Calu3 (cell line): ENCODE measurements at regions of chr1 and their contacts with region 1.

Region 1: DNA sequence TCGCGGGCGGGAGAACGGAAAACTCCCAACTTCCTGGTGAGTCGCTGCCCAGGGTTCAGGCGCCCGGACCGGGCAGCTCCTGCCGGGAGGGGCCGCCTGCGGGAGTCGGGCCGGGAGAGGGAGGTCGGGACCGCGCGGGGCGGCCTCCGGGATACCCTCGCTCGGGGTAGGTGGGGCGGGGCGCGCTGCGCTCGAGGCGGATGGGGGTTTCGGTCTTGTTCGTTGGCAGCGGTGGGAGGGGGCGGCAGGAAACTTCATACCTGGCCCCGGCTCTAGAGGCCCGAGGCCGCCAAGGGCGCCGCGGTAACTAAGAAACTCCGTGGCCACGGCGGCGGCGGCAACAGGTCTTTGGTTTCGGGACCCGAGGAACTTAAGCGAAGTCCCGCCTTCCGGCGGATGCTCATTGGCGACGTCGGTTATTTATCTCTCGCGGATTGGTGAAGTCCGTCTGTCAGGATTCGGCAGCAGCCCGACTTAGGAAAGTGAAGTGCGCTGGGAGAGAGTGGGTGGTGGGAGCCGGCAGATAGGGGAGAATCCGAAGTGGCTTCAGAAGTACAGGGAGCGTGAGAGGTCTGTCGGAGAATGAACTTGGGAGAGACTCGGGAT is 546 bp downstream of the NEK7 start:
- DNase-seq: peak; percentile 86
- H3K4me3 Mint-ChIP-seq: peak overlapping the region; percentile 87
- H3K27ac Mint-ChIP-seq: peak overlapping the region; percentile 81
- H3K4me1 Mint-ChIP-seq: peaks cover 51% of the 10 kb centered on the region
- H3K27me3 Mint-ChIP-seq: no peaks in the 10 kb centered on the region
- CTCF ChIP-seq: no peak

Region 2: GRCh38 chr1:197453376-197454058 is 703.8 kb before region 1 on chr1:
- CTCF ChIA-PET with region 1: no interaction called
- intact Hi-C with region 1: no loop called
- DNase-seq: no peak
- H3K4me3 Mint-ChIP-seq: no peak overlapping the region
- H3K27ac Mint-ChIP-seq: no peak overlapping the region
- H3K4me1 Mint-ChIP-seq: no peaks in the 10 kb centered on the region
- H3K27me3 Mint-ChIP-seq: no peaks in the 10 kb centered on the region
- CTCF ChIP-seq: no peak

Region 3: DNA sequence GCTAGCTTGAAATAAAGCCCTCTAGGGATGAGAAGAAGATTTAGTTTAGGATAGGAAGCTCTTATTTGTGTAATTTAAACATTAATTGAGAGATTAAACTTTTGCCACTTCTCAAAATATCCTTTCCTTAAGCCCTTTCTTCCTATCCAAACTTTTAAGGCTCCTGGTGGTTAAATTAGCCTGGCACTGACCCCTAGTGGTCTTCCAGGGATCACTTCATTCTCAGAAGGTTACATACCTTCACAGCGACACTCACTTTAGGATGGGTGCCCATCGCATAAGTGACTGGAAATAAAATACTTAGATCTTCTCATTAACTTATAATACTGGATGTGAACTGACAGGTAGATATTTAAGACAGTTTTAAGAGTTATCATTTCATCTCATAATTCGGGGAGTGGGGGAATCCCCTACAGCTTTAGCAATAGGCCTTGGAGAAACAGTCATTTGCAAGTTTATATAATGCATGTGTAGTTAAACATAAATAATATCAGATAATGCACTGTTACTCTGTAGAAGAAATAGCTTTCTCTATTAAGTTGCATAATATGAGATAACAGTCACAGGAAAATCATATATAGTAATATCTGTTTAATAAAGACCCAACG is 232.7 kb before region 1 on chr1:
- CTCF ChIA-PET with region 1: no interaction called
- intact Hi-C with region 1: loop called (anchors 10 kb)
- DNase-seq: peak; percentile 60
- H3K4me3 Mint-ChIP-seq: no peak overlapping the region
- H3K27ac Mint-ChIP-seq: no peak overlapping the region
- H3K4me1 Mint-ChIP-seq: peaks cover 49% of the 10 kb centered on the region
- H3K27me3 Mint-ChIP-seq: no peaks in the 10 kb centered on the region
- CTCF ChIP-seq: peak; percentile 51

Region 4: GRCh38 chr1:197994907-197995407 is 162.4 kb before region 1 on chr1:
- CTCF ChIA-PET with region 1: no interaction called
- intact Hi-C with region 1: loop called (anchors 1 kb)
- DNase-seq: peak; percentile 78
- H3K4me3 Mint-ChIP-seq: peak overlapping the region; percentile 63
- H3K27ac Mint-ChIP-seq: peak overlapping the region; percentile 94
- H3K4me1 Mint-ChIP-seq: peaks cover 22% of the 10 kb centered on the region
- H3K27me3 Mint-ChIP-seq: no peaks in the 10 kb centered on the region
- CTCF ChIP-seq: no peak

Region 5: GRCh38 chr1:198121058-198121829 is 36.1 kb before region 1 on chr1:
- CTCF ChIA-PET with region 1: interaction called, 14 read pairs
- intact Hi-C with region 1: loop called (anchors 1 kb)
- DNase-seq: peak; percentile 76
- H3K4me3 Mint-ChIP-seq: no peak overlapping the region
- H3K27ac Mint-ChIP-seq: no peak overlapping the region
- H3K4me1 Mint-ChIP-seq: peaks cover 24% of the 10 kb centered on the region
- H3K27me3 Mint-ChIP-seq: no peaks in the 10 kb centered on the region
- CTCF ChIP-seq: no peak

Region 6: GRCh38 chr1:198318085-198318484 is 160.7 kb after region 1 on chr1:
- CTCF ChIA-PET with region 1: no interaction called
- intact Hi-C with region 1: no loop called
- DNase-seq: no peak
- H3K4me3 Mint-ChIP-seq: no peak overlapping the region
- H3K27ac Mint-ChIP-seq: peak overlapping the region; percentile 60
- H3K4me1 Mint-ChIP-seq: peaks cover 27% of the 10 kb centered on the region
- H3K27me3 Mint-ChIP-seq: no peaks in the 10 kb centered on the region
- CTCF ChIP-seq: no peak

Region 7: GRCh38 chr1:198408716-198409115 is 251.4 kb after region 1 on chr1:
- CTCF ChIA-PET with region 1: no interaction called
- intact Hi-C with region 1: no loop called
- DNase-seq: no peak
- H3K4me3 Mint-ChIP-seq: no peak overlapping the region
- H3K27ac Mint-ChIP-seq: no peak overlapping the region
- H3K4me1 Mint-ChIP-seq: no peaks in the 10 kb centered on the region
- H3K27me3 Mint-ChIP-seq: no peaks in the 10 kb centered on the region
- CTCF ChIP-seq: no peak

Region 8: GRCh38 chr1:198443374-198444233 is 286.3 kb after region 1 on chr1:
- CTCF ChIA-PET with region 1: interaction called, 3 read pairs
- intact Hi-C with region 1: loop called (anchors 5 kb)
- DNase-seq: peak; percentile 76
- H3K4me3 Mint-ChIP-seq: peak overlapping the region; percentile 50
- H3K27ac Mint-ChIP-seq: peak overlapping the region; percentile 97
- H3K4me1 Mint-ChIP-seq: peaks cover 59% of the 10 kb centered on the region
- H3K27me3 Mint-ChIP-seq: no peaks in the 10 kb centered on the region
- CTCF ChIP-seq: no peak

Region 9: GRCh38 chr1:198681831-198682759 is 524.8 kb after region 1 on chr1:
- CTCF ChIA-PET with region 1: no interaction called
- intact Hi-C with region 1: loop called (anchors 5 kb)
- DNase-seq: peak; percentile 66
- H3K4me3 Mint-ChIP-seq: peak overlapping the region; percentile 53
- H3K27ac Mint-ChIP-seq: peak overlapping the region; percentile 81
- H3K4me1 Mint-ChIP-seq: peaks cover 20% of the 10 kb centered on the region
- H3K27me3 Mint-ChIP-seq: no peaks in the 10 kb centered on the region
- CTCF ChIP-seq: no peak